ENCODE measurements at regions of chr6 and their contacts with region 1.

Region 1: GRCh38 chr6:118283766-118284165 is 264.3 kb upstream of the PLN start:
- DNase-seq: no peak
- ATAC-seq: peak; percentile 58

Region 2: GRCh38 chr6:118509009-118509617 is 225.3 kb after region 1 on chr6:
- intact Hi-C with region 1: loop called (anchors 1 kb)
- DNase-seq: no peak
- ATAC-seq: no peak

Region 3: GRCh38 chr6:118562959-118563358 is 279.2 kb after region 1 on chr6:
- intact Hi-C with region 1: loop called (anchors 5 kb)
- DNase-seq: no peak
- ATAC-seq: peak; percentile 56

Region 4: GRCh38 chr6:118618679-118619377 is 335.1 kb after region 1 on chr6:
- intact Hi-C with region 1: loop called (anchors 5 kb)
- DNase-seq: no peak
- ATAC-seq: peak; percentile 79

Measured in Right ventricle myocardium inferior (tissue), 1 donor.